Caco-2 (cell line): ENCODE measurements at regions of chr11 and their contacts with region 1.

Region 1: DNA sequence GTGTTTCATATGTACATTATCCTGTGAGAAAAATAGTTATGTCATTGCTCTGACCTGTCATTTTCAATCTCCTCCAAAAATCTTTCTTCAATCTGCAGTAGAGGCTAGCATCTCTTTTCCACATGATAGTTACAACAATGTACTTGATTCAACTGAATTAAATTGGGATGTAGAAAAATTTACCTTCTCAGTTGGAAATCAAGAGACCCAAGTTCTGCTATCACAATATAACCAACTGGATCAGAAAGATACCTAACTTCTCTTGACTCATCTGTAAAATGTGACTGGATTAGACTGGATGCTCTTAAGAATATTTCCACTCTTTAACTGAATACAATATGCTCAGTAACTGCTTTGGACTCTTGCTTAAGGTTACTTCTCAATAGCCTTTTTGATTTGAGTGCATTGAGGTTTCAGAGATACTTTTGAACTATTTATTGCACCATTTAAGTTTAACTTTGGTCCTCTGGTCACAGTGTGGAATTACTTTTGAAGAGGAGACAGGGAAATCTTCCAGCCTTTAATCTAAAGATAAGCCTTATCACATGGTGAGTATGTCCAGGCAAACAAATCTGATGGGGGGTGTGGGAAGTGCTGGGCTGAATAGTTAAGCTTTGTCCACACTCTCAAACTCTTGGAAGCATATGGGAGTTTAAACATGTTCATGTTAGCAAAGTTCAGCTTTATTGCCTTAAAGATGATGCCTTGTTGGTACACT is 82.3 kb downstream of the YAP1 start:
- DNase-seq: peak; percentile 92 to 93
- H3K4me3 ChIP-seq: no peak overlapping the region
- H3K4me3 Mint-ChIP-seq: peak overlapping the region; percentile 20
- H3K27ac Mint-ChIP-seq: peak overlapping the region; percentile 25
- H3K4me1 ChIP-seq: peaks cover 71% of the 10 kb centered on the region
- H3K4me1 Mint-ChIP-seq: peaks cover 56% of the 10 kb centered on the region
- H3K27me3 ChIP-seq: no peaks in the 10 kb centered on the region
- H3K27me3 Mint-ChIP-seq: no peaks in the 10 kb centered on the region
- CTCF ChIP-seq: no peak

Region 2: DNA sequence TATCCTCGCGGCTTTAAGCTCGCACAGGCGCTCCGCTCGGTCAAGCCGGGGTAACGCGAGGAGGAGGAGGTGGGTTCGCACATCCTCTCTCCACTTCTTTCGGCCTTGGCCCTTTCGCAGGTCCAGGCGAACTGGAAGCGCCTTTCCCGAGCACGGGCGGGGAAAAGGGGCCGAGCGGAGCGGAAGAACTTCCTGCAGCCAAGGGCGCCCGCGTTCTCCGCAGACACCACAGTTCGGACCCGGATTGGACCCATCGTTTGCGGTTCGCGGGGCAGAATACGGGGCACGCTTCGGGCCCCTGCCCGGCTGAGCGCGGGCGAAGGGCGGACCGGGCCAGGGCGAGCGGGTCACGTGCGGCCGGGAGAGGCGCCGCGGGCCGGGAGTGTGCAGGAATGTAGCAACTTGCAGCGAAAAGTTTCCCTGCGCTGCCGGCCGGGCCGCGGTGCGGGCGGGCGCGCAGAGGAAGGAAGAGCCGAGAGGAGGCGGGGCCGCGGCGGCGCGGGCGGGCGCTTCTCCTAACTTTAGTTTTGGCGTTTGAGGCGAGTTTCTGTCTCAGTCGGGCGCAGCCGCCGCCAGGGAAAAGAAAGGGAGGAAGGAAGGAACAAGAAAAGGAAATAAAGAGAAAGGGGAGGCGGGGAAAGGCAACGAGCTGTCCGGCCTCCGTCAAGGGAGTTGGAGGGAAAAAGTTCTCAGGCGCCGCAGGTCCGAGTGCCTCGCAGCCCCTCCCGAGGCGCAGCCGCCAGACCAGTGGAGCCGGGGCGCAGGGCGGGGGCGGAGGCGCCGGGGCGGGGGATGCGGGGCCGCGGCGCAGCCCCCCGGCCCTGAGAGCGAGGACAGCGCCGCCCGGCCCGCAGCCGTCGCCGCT is 82.4 kb before region 1 on chr11 and contains the start of gene YAP1:
- CTCF ChIA-PET with region 1: no interaction called
- POLR2A ChIA-PET with region 1: interaction called, 7 read pairs
- intact Hi-C with region 1: loop called (anchors 1 kb)
- DNase-seq: peak; percentile 97 to 99
- H3K4me3 ChIP-seq: peak within 1 kb of the TSS; percentile 96
- H3K4me3 Mint-ChIP-seq: peak within 1 kb of the TSS; percentile 91
- H3K27ac Mint-ChIP-seq: peak within 1 kb of the TSS; percentile 98
- H3K4me1 ChIP-seq: peaks cover 20% of the 10 kb centered on the region
- H3K4me1 Mint-ChIP-seq: peaks cover 16% of the 10 kb centered on the region
- H3K27me3 ChIP-seq: no peaks in the 10 kb centered on the region
- H3K27me3 Mint-ChIP-seq: no peaks in the 10 kb centered on the region
- CTCF ChIP-seq: no peak
- total RNA-seq, gene YAP1: 207 and 227 TPM in 2 replicates

Region 3: GRCh38 chr11:102115557-102115956 is 77.0 kb before region 1 on chr11:
- CTCF ChIA-PET with region 1: no interaction called
- POLR2A ChIA-PET with region 1: interaction called, 7 read pairs
- intact Hi-C with region 1: loop called (anchors 1 kb)
- DNase-seq: peak; percentile 78 to 84
- H3K4me3 ChIP-seq: no peak overlapping the region
- H3K4me3 Mint-ChIP-seq: peak overlapping the region; percentile 31
- H3K27ac Mint-ChIP-seq: peak overlapping the region; percentile 31
- H3K4me1 ChIP-seq: peaks cover 69% of the 10 kb centered on the region
- H3K4me1 Mint-ChIP-seq: peaks cover 54% of the 10 kb centered on the region
- H3K27me3 ChIP-seq: no peaks in the 10 kb centered on the region
- H3K27me3 Mint-ChIP-seq: no peaks in the 10 kb centered on the region
- CTCF ChIP-seq: no peak

Region 4: GRCh38 chr11:102157219-102157618 is 35.3 kb before region 1 on chr11:
- CTCF ChIA-PET with region 1: no interaction called
- POLR2A ChIA-PET with region 1: no interaction called
- intact Hi-C with region 1: loop called (anchors 2 kb)
- DNase-seq: peak in 1 of 2 experiments; percentile 32
- H3K4me3 ChIP-seq: no peak overlapping the region
- H3K4me3 Mint-ChIP-seq: no peak overlapping the region
- H3K27ac Mint-ChIP-seq: peak overlapping the region; percentile 13
- H3K4me1 ChIP-seq: peaks cover 42% of the 10 kb centered on the region
- H3K4me1 Mint-ChIP-seq: peaks cover 52% of the 10 kb centered on the region
- H3K27me3 ChIP-seq: no peaks in the 10 kb centered on the region
- H3K27me3 Mint-ChIP-seq: no peaks in the 10 kb centered on the region
- CTCF ChIP-seq: no peak

Region 5: DNA sequence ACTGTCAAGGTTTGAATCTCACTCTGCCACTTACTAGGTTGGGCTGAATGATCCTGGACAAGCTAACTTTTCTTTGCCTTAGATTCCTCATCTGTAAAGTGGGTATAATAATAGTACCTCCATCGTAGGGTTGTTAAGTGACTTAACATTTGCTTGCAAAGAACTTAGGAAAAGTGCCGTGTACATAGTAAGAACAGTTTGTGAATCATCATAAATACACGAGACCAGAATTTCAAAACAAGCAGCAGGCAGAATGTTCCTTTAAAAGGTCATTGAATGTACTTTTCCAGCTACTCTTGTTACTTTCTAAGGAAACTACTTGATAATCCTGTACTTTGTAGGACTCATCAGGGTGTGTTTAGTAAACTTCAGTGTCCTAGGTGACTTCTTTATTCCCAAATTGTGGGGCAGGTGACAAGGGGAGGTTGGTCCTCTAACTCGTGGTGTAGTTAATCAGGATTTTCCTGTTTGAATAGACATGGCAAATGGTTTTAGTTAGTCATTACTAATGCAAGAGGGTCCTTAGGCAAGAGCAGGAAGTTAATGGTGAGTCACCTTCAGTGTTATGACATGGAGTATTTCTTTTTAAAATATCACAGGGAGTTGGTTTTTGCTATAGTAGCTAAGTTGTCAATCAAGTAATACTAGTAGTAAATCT is 14.4 kb before region 1 on chr11:
- CTCF ChIA-PET with region 1: no interaction called
- POLR2A ChIA-PET with region 1: no interaction called
- intact Hi-C with region 1: loop called (anchors 1 kb)
- DNase-seq: peak in 1 of 2 experiments; percentile 76
- H3K4me3 ChIP-seq: no peak overlapping the region
- H3K4me3 Mint-ChIP-seq: no peak overlapping the region
- H3K27ac Mint-ChIP-seq: peak overlapping the region; percentile 63
- H3K4me1 ChIP-seq: peaks cover 26% of the 10 kb centered on the region
- H3K4me1 Mint-ChIP-seq: peaks cover 28% of the 10 kb centered on the region
- H3K27me3 ChIP-seq: no peaks in the 10 kb centered on the region
- H3K27me3 Mint-ChIP-seq: no peaks in the 10 kb centered on the region
- CTCF ChIP-seq: no peak

Region 6: GRCh38 chr11:102229510-102230123 is 37.1 kb after region 1 on chr11:
- CTCF ChIA-PET with region 1: no interaction called
- POLR2A ChIA-PET with region 1: no interaction called
- intact Hi-C with region 1: loop called (anchors 1 kb)
- DNase-seq: peak; percentile 58 to 68
- H3K4me3 ChIP-seq: no peak overlapping the region
- H3K4me3 Mint-ChIP-seq: peak overlapping the region; percentile 13
- H3K27ac Mint-ChIP-seq: peak overlapping the region; percentile 1
- H3K4me1 ChIP-seq: peaks cover 44% of the 10 kb centered on the region
- H3K4me1 Mint-ChIP-seq: peaks cover 44% of the 10 kb centered on the region
- H3K27me3 ChIP-seq: no peaks in the 10 kb centered on the region
- H3K27me3 Mint-ChIP-seq: no peaks in the 10 kb centered on the region
- CTCF ChIP-seq: peak in 1 of 2 experiments; percentile 9